Activated B cell treated with CpG ODN at 0.5 μM for 24 hours (primary cell): ENCODE measurements at regions of chr1 and their contacts with region 1.

Region 1: GRCh38 chr1:8848663-8849386 is 29.7 kb downstream of the ENO1 start:
- DNase-seq: peak; percentile 76
- ATAC-seq: peak; percentile 92
- H3K4me3 Mint-ChIP-seq: no peak overlapping the region
- H3K27ac Mint-ChIP-seq: no peak overlapping the region
- H3K4me1 Mint-ChIP-seq: peaks cover 2% of the 10 kb centered on the region
- H3K27me3 Mint-ChIP-seq: peaks cover 4% of the 10 kb centered on the region
- CTCF ChIP-seq: no peak

Region 2: GRCh38 chr1:7983086-7983778 is 865.6 kb before region 1 on chr1:
- CTCF ChIA-PET with region 1: interaction called, 5 read pairs
- POLR2A ChIA-PET with region 1: no interaction called
- intact Hi-C with region 1: loop called (anchors 1 kb)
- DNase-seq: no peak
- ATAC-seq: no peak
- H3K4me3 Mint-ChIP-seq: no peak overlapping the region
- H3K27ac Mint-ChIP-seq: no peak overlapping the region
- H3K4me1 Mint-ChIP-seq: peaks cover 6% of the 10 kb centered on the region
- H3K27me3 Mint-ChIP-seq: no peaks in the 10 kb centered on the region
- CTCF ChIP-seq: no peak

Region 3: GRCh38 chr1:8409106-8409505 is 439.7 kb before region 1 on chr1:
- CTCF ChIA-PET with region 1: interaction called, 9 read pairs
- POLR2A ChIA-PET with region 1: no interaction called
- intact Hi-C with region 1: loop called (anchors 10 kb)
- DNase-seq: no peak
- ATAC-seq: peak; percentile 78
- H3K4me3 Mint-ChIP-seq: peak overlapping the region; percentile 0
- H3K27ac Mint-ChIP-seq: peak overlapping the region; percentile 54
- H3K4me1 Mint-ChIP-seq: peaks cover 44% of the 10 kb centered on the region
- H3K27me3 Mint-ChIP-seq: no peaks in the 10 kb centered on the region
- CTCF ChIP-seq: no peak

Region 4: DNA sequence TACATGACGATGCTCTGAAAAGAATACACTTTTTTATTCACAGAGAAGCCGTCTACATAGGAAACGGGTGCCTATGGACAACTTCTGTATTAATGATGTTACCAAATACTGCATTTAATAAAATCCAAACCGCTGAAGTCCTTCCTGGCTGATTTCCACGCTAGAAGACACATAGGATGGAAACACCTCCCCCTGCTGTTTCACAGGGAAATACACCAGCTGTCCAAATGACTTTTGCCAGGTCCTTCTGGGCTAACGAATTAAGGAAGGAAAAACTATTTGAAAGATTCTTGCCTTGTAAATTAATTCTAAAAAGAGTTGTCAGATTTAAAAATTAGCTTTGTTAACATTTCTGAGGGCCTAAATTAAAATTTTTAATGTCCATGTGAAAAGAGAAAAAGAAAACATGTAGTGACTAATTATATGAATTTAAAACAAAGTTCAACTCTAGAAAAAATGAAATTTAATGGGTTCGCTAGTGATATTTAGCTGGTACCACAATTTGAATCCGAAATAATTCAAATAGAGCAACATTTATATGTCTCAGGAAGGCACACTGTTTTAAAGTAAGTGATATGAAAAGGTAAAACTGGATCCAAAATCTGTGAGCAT is 177.4 kb before region 1 on chr1:
- CTCF ChIA-PET with region 1: interaction called, 17 read pairs
- POLR2A ChIA-PET with region 1: no interaction called
- intact Hi-C with region 1: no loop called
- DNase-seq: no peak
- ATAC-seq: peak; percentile 49
- H3K4me3 Mint-ChIP-seq: peak overlapping the region; percentile 12
- H3K27ac Mint-ChIP-seq: no peak overlapping the region
- H3K4me1 Mint-ChIP-seq: peaks cover 52% of the 10 kb centered on the region
- H3K27me3 Mint-ChIP-seq: no peaks in the 10 kb centered on the region
- CTCF ChIP-seq: no peak

Region 5: GRCh38 chr1:8727809-8728213 is 121.0 kb before region 1 on chr1:
- CTCF ChIA-PET with region 1: interaction called, 33 read pairs
- POLR2A ChIA-PET with region 1: no interaction called
- intact Hi-C with region 1: loop called (anchors 5 kb)
- DNase-seq: no peak
- ATAC-seq: no peak
- H3K4me3 Mint-ChIP-seq: no peak overlapping the region
- H3K27ac Mint-ChIP-seq: no peak overlapping the region
- H3K4me1 Mint-ChIP-seq: peaks cover 18% of the 10 kb centered on the region
- H3K27me3 Mint-ChIP-seq: no peaks in the 10 kb centered on the region
- CTCF ChIP-seq: no peak

Region 6: GRCh38 chr1:8858888-8859706 is 10.3 kb after region 1 on chr1:
- CTCF ChIA-PET with region 1: interaction called, 46 read pairs
- POLR2A ChIA-PET with region 1: interaction called, 6 read pairs
- intact Hi-C with region 1: no loop called
- DNase-seq: no peak
- ATAC-seq: peak; percentile 80
- H3K4me3 Mint-ChIP-seq: no peak overlapping the region
- H3K27ac Mint-ChIP-seq: peak overlapping the region; percentile 13
- H3K4me1 Mint-ChIP-seq: peaks cover 21% of the 10 kb centered on the region
- H3K27me3 Mint-ChIP-seq: no peaks in the 10 kb centered on the region
- CTCF ChIP-seq: no peak

Region 7: DNA sequence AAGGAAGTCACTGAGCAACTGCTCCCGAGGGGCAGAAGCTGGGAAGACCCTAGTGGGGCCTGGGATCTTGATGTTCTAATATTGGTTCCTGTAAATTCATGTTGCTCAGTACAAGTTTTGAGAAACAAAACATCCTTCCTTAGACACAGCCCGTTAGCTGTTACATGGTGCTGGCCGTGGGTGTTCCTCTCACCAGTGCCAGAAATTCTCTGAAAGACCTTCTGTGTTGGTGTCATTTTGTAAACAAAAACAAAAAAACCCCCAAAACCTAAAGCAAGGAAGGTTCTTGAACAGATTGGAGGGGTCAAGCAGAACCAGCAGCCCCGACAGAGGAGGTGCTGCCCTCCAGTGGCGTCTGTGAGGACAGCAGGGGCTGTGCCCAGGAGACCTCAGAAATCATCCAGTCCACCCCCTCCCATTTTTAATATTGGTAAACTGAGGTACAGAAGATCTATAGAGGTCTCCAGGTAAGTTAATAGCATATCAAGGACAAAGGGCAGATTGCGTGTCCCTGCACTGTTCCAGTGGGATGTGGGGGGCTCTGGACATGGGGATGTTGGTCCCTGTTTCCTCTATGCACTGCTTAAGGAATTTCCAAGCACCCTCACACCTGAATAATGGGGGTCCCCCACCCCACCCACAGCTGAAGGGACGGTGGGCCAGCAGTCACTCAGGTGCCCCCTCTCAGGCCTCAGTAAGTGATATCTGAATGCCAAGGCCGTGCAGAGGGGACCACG is 139.2 kb after region 1 on chr1:
- CTCF ChIA-PET with region 1: no interaction called
- POLR2A ChIA-PET with region 1: no interaction called
- intact Hi-C with region 1: no loop called
- DNase-seq: peak; percentile 59
- ATAC-seq: peak; percentile 91
- H3K4me3 Mint-ChIP-seq: no peak overlapping the region
- H3K27ac Mint-ChIP-seq: no peak overlapping the region
- H3K4me1 Mint-ChIP-seq: peaks cover 10% of the 10 kb centered on the region
- H3K27me3 Mint-ChIP-seq: peaks cover 11% of the 10 kb centered on the region
- CTCF ChIP-seq: peak; percentile 83

Region 8: GRCh38 chr1:9004700-9005394 is 156.0 kb after region 1 on chr1:
- CTCF ChIA-PET with region 1: interaction called, 10 read pairs
- POLR2A ChIA-PET with region 1: no interaction called
- intact Hi-C with region 1: no loop called
- DNase-seq: peak; percentile 74
- ATAC-seq: peak; percentile 75
- H3K4me3 Mint-ChIP-seq: no peak overlapping the region
- H3K27ac Mint-ChIP-seq: no peak overlapping the region
- H3K4me1 Mint-ChIP-seq: peaks cover 34% of the 10 kb centered on the region
- H3K27me3 Mint-ChIP-seq: peaks cover 2% of the 10 kb centered on the region
- CTCF ChIP-seq: peak; percentile 78